Ovary (tissue), 10 donors: ENCODE measurements at regions of chr7 and their contacts with region 1.

Region 1: DNA sequence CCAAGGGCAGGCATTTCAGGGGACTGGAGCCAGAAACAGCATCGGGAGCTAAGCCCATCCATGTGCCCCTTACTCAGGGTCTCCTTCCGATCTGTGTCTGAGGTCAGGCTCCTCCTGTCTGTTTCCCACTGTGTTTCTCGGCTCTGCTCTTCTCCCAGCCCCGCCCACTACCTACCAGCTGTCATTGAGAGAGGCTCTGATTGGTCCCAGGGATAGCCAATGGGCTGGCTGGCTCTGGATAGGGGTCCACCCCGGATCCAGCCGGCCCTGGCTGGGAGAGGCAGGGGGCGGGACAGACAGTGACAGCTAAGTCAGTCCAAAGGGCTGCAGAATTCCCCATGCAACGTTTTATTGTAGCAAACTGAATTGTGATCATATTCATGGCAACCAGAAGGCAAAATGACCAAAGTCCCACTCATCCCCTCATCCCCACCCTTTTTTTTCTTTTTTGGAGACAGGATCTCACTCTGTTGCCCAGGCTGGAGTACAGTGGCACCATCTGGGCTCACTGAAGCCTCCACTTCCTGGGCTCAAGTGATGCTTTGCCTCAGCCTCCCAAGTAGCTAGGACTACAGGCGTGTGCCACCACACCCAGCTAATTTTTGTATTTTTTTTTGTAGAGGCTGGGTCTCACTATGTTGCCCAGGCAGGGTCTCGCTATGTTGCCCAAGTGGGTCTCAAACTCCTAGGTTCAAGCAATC is 76.3 kb downstream of the CLIP2 start:
- DNase-seq: peak; percentile 39 to 75 (median 54)
- H3K4me3 ChIP-seq: no peak overlapping the region
- H3K27ac ChIP-seq: no peak overlapping the region
- H3K4me1 ChIP-seq: no peaks in the 10 kb centered on the region
- H3K27me3 ChIP-seq: no peaks in the 10 kb centered on the region
- CTCF ChIP-seq: no peak
- EP300 ChIP-seq: no peak
- POLR2A ChIP-seq: no peak

Region 2: GRCh38 chr7:74289659-74290514 is 75.6 kb before region 1 on chr7:
- intact Hi-C with region 1: loop called in 2 of 4 experiments (anchors 10 kb)
- DNase-seq: peak; percentile 37 to 67 (median 58)
- H3K4me3 ChIP-seq: peak overlapping the region; percentile 52
- H3K27ac ChIP-seq: peak overlapping the region; percentile 21 to 44
- H3K4me1 ChIP-seq: peaks cover 15% of the 10 kb centered on the region
- H3K27me3 ChIP-seq: no peaks in the 10 kb centered on the region
- CTCF ChIP-seq: no peak
- EP300 ChIP-seq: no peak
- POLR2A ChIP-seq: no peak

Region 3: DNA sequence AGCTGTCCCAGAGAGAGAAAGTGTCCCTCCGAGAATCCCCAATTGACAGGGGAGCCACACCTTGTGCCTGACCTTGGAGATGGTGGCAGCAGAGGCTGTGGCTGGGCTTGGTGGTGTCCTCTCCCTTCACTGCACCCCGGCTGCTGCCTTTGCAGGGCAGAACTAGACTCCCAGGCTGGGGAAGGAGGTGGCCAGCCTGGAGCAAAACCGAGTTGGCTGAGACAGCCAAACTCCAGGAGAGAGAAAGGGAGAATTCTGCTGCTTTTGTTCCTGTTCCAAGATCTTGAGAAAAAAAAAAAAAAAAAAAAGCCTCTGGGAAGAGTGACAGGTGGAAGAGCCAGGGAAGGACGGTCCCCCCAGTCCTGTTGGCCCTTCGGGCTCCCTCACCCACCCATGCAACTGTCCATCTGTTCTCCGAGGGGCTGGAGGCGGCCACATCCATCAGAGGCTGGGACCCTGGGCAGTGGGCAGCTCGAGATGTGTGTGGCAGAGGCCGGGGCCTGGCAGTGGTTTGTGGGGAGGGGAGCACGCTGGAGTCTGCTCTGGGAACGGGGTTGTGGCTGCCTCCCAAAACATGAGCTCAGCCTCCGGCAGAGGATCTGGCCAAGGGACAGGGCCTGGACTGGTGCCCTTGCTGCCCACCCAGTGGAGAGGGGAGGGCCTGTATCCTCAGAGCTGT is 40.8 kb before region 1 on chr7:
- intact Hi-C with region 1: no loop called
- DNase-seq: peak in 4 of 5 donors; percentile 37 to 61 (median 54)
- H3K4me3 ChIP-seq: no peak overlapping the region
- H3K27ac ChIP-seq: no peak overlapping the region
- H3K4me1 ChIP-seq: peaks cover 4% of the 10 kb centered on the region
- H3K27me3 ChIP-seq: no peaks in the 10 kb centered on the region
- CTCF ChIP-seq: no peak
- EP300 ChIP-seq: no peak
- POLR2A ChIP-seq: no peak